ENCODE measurements at regions of chr2 and their contacts with region 1.

Region 1: DNA sequence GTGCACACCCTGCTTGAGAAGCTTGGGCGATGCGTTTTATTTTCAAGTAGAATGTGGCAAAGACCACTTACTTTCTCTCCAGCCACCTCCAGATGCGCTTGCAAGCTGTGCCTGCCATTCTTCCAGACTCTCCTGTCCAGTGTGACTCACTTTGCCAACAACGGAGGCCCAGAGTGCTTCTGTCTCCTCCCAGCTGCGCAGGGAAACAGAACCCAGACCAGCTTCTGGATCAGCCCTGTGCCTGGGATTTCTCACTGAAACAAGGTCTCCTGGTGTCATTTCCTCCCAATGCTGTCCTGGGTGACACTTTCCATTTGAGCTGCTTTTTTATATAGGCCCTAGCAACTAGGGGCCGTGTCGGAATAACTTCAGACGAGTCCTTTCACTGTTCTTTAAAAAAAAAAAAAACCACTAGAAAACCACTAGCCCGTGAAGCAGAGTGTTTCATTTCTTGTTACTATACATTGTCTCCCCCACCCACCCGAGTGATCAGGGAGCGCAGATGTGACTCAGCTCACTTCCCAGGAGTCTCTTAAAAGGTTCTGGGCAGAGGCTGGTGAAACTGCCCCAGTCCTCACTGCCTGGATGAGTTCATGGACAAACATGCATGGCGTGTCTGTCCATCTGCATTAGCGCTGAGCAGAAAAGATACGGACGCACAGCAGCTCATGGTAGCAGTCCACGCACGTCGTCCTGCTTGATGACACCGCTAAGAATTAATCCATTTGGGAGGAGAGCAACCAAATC is 25.3 kb upstream of the RPL31 start:
- DNase-seq: peak in 1 of 2 donors; percentile 56
- H3K4me3 ChIP-seq: no peak overlapping the region
- H3K27ac ChIP-seq: peak overlapping the region in 1 of 2 donors; percentile 83
- H3K4me1 ChIP-seq: peaks cover 0 to 23% (median 3%) of the 10 kb centered on the region in 4 donors
- H3K27me3 ChIP-seq: no peaks in the 10 kb centered on the region
- CTCF ChIP-seq: no peak

Region 2: DNA sequence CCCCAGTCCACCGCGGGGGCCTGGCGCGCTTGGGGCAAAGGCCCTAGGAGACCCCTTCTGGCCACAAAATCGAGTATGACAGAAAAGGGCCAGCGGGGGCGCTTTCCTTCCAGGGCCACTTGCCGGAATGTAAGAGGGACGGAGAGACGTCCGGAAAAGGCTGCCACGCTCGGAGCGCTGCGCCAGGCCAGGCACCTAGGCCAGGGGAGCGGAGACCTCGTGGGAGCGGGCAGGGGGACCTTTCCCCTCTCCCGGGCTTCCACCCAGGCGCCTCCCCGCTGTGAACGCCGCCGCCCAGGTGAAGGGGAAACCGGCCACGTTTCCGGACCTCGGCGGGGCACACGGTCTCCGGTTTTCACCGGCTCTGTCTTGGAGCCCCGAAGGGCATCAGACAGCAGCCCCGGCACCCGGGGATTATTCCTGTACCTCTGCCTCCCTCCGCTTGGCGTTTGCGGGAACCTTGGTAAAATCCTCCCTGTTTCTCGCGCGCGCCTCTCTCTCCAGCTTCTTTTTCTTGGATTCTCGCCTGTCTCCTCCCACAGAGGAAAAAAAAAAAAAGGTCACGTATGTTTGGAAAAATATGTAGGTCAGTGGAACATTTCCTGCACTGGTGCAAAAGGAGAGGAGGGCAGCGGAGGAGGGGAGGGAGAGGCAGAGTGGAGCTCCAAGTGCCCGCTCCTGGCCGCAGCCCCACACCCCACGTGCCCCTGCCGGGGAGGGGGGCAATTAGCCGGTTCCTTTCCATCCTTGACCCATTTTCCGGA is 158.0 kb before region 1 on chr2:
- intact Hi-C with region 1: loop called (anchors 5 kb)
- DNase-seq: peak in 1 of 2 donors; percentile 89
- H3K4me3 ChIP-seq: peak overlapping the region; percentile 64 to 91
- H3K27ac ChIP-seq: peak overlapping the region; percentile 89
- H3K4me1 ChIP-seq: peaks cover 0 to 45% (median 17%) of the 10 kb centered on the region in 4 donors
- H3K27me3 ChIP-seq: no peaks in the 10 kb centered on the region
- CTCF ChIP-seq: peak; percentile 6 to 11

Region 3: DNA sequence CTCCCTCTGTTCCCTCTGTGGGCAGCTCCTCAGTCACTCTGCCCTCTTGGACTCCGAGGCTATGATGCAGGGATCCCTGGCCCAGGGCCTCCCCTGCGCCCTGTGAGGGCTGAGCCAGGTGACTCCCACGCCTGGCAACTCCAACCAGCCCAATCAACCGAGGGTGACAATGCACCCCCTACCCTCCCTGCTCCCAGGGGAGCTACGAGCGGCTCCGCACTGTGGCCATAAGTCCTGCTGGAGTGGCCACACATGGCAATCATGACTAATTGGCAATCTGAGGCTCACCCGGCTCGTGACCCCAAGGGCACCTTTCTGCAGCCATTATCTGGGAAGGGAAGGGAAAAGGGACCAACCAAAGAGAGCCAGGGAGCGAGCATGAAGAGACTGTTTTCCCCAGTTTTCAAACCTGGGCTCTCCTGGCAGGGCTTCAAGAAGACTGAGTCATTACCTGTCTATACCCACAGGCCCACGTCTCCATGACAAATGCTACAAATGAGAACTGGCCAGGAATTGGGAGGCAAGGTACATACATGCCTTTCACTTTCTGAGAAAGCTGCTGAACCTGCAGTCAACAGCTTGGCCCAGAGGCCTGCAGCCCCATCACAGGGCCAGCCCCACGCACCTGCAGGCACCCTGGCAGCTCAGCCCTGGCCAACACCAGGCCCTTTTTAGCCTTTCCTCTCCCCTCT is 70.4 kb after region 1 on chr2:
- intact Hi-C with region 1: no loop called
- DNase-seq: no peak
- H3K4me3 ChIP-seq: no peak overlapping the region
- H3K27ac ChIP-seq: no peak overlapping the region
- H3K4me1 ChIP-seq: peaks cover 0 to 10% (median 4%) of the 10 kb centered on the region in 4 donors
- H3K27me3 ChIP-seq: no peaks in the 10 kb centered on the region
- CTCF ChIP-seq: no peak

Measured in tibial artery (tissue), 4 donors.